GM12878 (cell line): ENCODE measurements at regions of chr12 and their contacts with region 1.

Region 1: GRCh38 chr12:92493816-92494215 is 209.0 kb upstream of the PLEKHG7 start:
- DNase-seq: no peak
- ATAC-seq: peak; percentile 57
- H3K4me3 ChIP-seq: no peak overlapping the region
- H3K27ac ChIP-seq: peak overlapping the region; percentile 81
- H3K4me1 ChIP-seq: peaks cover 74% of the 10 kb centered on the region
- H3K27me3 ChIP-seq: no peaks in the 10 kb centered on the region
- CTCF ChIP-seq: no peak
- EP300 ChIP-seq: peak in 1 of 2 experiments; percentile 36; a peak in 1 of 4 replicates
- POLR2A ChIP-seq: no peak
- RAD21 ChIP-seq: no peak

Region 2: DNA sequence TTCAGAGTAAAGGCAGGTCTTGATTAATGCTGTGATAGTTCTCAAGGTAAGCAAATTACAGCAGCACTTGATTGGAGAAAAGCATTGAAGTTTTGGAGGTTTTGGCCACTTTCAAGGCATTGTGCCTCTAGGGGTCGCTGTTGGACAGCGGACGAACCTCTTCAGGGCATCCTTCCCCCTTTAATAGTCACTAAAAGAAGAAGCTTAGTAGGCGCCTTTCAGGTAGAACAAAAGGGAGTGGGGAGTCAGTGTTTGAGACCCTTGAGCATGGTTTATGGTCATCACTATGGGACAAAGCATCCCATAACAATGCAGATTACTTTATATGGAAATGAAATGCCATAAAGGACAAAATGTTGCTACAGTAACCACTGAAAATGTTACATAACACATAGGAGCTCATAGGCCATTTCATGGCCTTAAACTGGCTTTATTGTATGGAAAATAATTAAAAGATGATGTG is 1111.7 kb before region 1 on chr12:
- CTCF ChIA-PET with region 1: interaction called, 4 read pairs
- POLR2A ChIA-PET with region 1: no interaction called
- RAD21 ChIA-PET with region 1: interaction called, 3 read pairs
- SMC1A ChIA-PET with region 1: interaction called, 3 read pairs
- in situ Hi-C with region 1: no loop called
- intact Hi-C with region 1: loop called (anchors 10 kb)
- DNase-seq: peak; percentile 54
- ATAC-seq: peak; percentile 95
- H3K4me3 ChIP-seq: peak overlapping the region; percentile 68
- H3K27ac ChIP-seq: peak overlapping the region; percentile 37; the same call in 1 of the 2 replicates
- H3K4me1 ChIP-seq: peaks cover 3% of the 10 kb centered on the region; the same call in 1 of the 2 replicates
- H3K27me3 ChIP-seq: no peaks in the 10 kb centered on the region
- CTCF ChIP-seq: peak; percentile 80 to 89 (median 87)
- EP300 ChIP-seq: no peak
- POLR2A ChIP-seq: no peak
- RAD21 ChIP-seq: peak; percentile 92

Region 3: DNA sequence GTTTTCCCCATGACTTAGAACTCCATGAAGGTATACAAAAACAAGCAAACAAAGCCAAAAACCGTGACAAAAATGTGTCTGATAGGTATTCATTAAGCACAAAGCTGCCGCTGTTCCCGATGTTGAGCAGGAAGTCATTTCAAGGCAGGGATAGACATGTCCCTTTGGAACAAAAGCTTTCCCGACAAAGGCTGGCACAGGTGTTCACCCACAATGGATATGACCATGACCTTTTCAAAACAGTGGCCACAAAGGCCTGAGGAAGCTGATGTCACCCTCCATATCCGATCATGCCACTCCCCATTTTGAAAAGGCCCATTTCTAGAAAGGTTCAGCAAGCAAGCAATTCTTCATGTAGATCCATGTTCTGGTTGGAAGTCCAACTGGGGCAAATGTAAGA is 627.2 kb before region 1 on chr12:
- CTCF ChIA-PET with region 1: no interaction called
- POLR2A ChIA-PET with region 1: no interaction called
- RAD21 ChIA-PET with region 1: no interaction called
- SMC1A ChIA-PET with region 1: no interaction called
- in situ Hi-C with region 1: no loop called
- intact Hi-C with region 1: no loop called
- DNase-seq: no peak
- ATAC-seq: no peak
- H3K4me3 ChIP-seq: no peak overlapping the region
- H3K27ac ChIP-seq: no peak overlapping the region
- H3K4me1 ChIP-seq: no peaks in the 10 kb centered on the region
- H3K27me3 ChIP-seq: no peaks in the 10 kb centered on the region
- CTCF ChIP-seq: no peak
- EP300 ChIP-seq: no peak
- POLR2A ChIP-seq: no peak
- RAD21 ChIP-seq: no peak

Region 4: DNA sequence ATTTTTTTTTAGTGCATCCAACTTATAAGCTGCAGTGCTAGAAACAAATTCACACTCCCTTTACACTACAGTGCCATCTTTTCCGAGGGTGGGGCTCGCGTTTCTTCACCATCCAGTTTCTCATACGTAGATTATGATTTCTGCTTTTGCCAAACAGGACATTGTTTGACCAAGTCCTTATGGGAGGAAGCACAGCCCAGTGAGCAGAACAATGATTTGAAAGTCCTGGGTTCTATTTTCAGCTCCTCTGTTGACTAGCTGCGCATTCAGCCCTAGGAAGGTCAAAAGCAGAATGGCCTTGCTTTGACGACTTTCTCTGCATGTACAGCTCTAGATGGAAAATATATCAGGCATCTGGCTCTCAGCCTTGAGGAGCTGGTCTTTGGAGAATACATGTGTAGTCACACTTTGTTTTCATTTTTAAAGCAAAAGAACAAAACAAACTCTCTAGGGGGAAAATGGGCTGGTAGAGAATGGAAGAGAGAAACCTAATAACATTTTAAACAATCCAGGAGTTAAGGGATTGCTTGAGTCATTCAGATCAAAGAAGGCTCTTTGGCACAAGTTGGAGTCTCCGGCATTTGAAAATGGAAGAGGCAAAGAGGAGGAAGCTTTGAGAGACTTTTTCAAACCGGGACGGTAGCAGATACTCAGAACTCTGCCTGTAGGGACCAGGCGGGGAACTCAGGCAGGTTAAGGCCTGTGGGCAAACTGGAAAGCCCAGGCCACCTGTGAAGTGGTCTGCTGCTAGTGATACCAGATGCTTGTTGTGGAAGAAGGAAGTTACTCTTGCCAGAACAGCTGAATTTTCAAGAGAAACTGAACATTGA is 48.3 kb before region 1 on chr12:
- CTCF ChIA-PET with region 1: interaction called, 9 read pairs
- POLR2A ChIA-PET with region 1: interaction called, 4 read pairs
- RAD21 ChIA-PET with region 1: interaction called, 22 read pairs
- SMC1A ChIA-PET with region 1: interaction called, 49 read pairs
- in situ Hi-C with region 1: no loop called
- intact Hi-C with region 1: no loop called
- DNase-seq: peak; percentile 97
- ATAC-seq: peak; percentile 90
- H3K4me3 ChIP-seq: peak overlapping the region; percentile 41
- H3K27ac ChIP-seq: peak overlapping the region; percentile 100
- H3K4me1 ChIP-seq: peaks cover 44% of the 10 kb centered on the region
- H3K27me3 ChIP-seq: no peaks in the 10 kb centered on the region
- CTCF ChIP-seq: no peak
- EP300 ChIP-seq: peak; percentile 89 to 91
- POLR2A ChIP-seq: peak; percentile 61
- RAD21 ChIP-seq: peak; percentile 32; the same call in 1 of the 2 replicates

Region 5: DNA sequence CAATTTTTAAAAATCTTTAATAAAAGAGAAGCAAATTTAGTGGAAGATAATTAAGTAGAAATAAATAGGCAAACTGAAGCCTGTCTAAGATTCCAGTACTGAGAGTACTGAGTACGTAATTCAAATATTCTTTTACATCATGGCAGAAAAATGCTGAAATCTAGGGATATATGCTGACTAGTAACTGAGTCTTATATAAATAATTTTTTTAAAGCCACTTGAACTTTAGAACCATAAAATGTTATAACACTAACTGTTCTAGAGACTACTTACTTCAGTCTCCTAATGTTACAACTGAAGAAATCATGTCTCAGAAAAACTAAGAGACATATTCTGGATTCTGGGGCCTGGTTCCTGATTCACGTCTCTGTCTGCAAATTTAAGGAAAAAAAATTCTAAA is 21.6 kb before region 1 on chr12:
- CTCF ChIA-PET with region 1: interaction called, 13 read pairs
- POLR2A ChIA-PET with region 1: interaction called, 49 read pairs
- RAD21 ChIA-PET with region 1: interaction called, 97 read pairs
- SMC1A ChIA-PET with region 1: interaction called, 167 read pairs
- in situ Hi-C with region 1: no loop called
- intact Hi-C with region 1: no loop called
- DNase-seq: no peak
- ATAC-seq: no peak
- H3K4me3 ChIP-seq: no peak overlapping the region
- H3K27ac ChIP-seq: peak overlapping the region; percentile 81
- H3K4me1 ChIP-seq: peaks cover 40% of the 10 kb centered on the region
- H3K27me3 ChIP-seq: no peaks in the 10 kb centered on the region
- CTCF ChIP-seq: no peak
- EP300 ChIP-seq: no peak
- POLR2A ChIP-seq: no peak
- RAD21 ChIP-seq: no peak

Region 6: DNA sequence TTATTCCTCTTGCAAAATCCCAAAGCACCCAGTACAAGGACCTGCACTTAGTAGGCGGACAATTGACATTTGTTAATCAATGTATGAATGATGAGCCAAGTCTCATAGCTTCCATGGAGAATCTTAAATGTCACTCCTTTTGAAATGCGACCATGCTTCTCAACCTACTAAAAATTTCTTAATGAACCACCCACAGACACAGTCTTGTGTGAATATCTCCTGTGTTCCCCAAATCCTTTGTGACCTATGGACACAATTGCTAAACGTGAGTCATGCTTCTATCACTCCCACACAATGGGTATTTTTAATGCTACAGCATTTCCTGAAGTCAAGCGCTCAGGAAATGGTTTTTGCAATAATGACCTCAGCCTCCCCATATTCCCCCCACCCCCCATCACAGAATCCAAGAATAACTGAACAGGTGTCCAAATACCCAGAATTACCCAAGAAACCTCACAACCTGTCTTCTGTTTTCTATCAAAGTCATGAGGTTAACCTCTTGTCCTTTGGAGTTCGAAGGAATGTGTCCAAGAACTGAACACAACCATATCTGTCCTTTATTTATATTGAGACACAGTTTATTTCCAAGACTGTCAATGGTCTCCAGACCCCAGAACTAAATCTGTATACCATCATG is 45.4 kb after region 1 on chr12:
- CTCF ChIA-PET with region 1: interaction called, 6 read pairs
- POLR2A ChIA-PET with region 1: interaction called, 5 read pairs
- RAD21 ChIA-PET with region 1: interaction called, 8 read pairs
- SMC1A ChIA-PET with region 1: interaction called, 120 read pairs
- in situ Hi-C with region 1: no loop called
- intact Hi-C with region 1: no loop called
- DNase-seq: peak; percentile 93
- ATAC-seq: peak; percentile 54
- H3K4me3 ChIP-seq: no peak overlapping the region
- H3K27ac ChIP-seq: peak overlapping the region; percentile 99
- H3K4me1 ChIP-seq: peaks cover 72% of the 10 kb centered on the region
- H3K27me3 ChIP-seq: no peaks in the 10 kb centered on the region
- CTCF ChIP-seq: no peak
- EP300 ChIP-seq: peak; percentile 90 to 98
- POLR2A ChIP-seq: no peak
- RAD21 ChIP-seq: 0 out of 2 replicates have a peak, but pooled peaks have one; percentile 36

Region 7: GRCh38 chr12:92551853-92552397 is 58.1 kb after region 1 on chr12:
- CTCF ChIA-PET with region 1: interaction called, 5 read pairs
- POLR2A ChIA-PET with region 1: interaction called, 4 read pairs
- RAD21 ChIA-PET with region 1: interaction called, 356 read pairs
- SMC1A ChIA-PET with region 1: interaction called, 805 read pairs
- in situ Hi-C with region 1: no loop called
- intact Hi-C with region 1: no loop called
- DNase-seq: peak; percentile 98
- ATAC-seq: peak; percentile 75
- H3K4me3 ChIP-seq: peak overlapping the region; percentile 17; the same call in 1 of the 2 replicates
- H3K27ac ChIP-seq: peak overlapping the region; percentile 98
- H3K4me1 ChIP-seq: peaks cover 67% of the 10 kb centered on the region
- H3K27me3 ChIP-seq: no peaks in the 10 kb centered on the region
- CTCF ChIP-seq: no peak
- EP300 ChIP-seq: peak; percentile 92 to 97
- POLR2A ChIP-seq: peak; percentile 57
- RAD21 ChIP-seq: no peak